Dorsolateral prefrontal cortex (tissue), 120 donors: ENCODE measurements at regions of chr10 and their contacts with region 1.

Region 1: GRCh38 chr10:78211561-78212051 is 177.9 kb downstream of the RPS24 start:
- DNase-seq: peak in 9 of 10 donors; percentile 25 to 84 (median 67)
- H3K4me3 ChIP-seq: no peak overlapping the region
- H3K27ac ChIP-seq: peak overlapping the region in 10 of 59 donors; percentile 6 to 51 (median 28)
- H3K27me3 ChIP-seq: no peaks in the 10 kb centered on the region
- CTCF ChIP-seq: peak in 55 of 56 donors; percentile 38 to 85 (median 70)

Region 2: GRCh38 chr10:78047314-78047891 is 164.2 kb before region 1 on chr10:
- intact Hi-C with region 1: loop called in 1 of 2 experiments (anchors 2 kb)
- DNase-seq: peak; percentile 88 to 98 (median 92)
- H3K4me3 ChIP-seq: peak overlapping the region in 17 of 59 donors; percentile 10 to 32 (median 22)
- H3K27ac ChIP-seq: peak overlapping the region in 12 of 59 donors; percentile 19 to 66 (median 42)
- H3K27me3 ChIP-seq: no peaks in the 10 kb centered on the region
- CTCF ChIP-seq: peak; percentile 88 to 99 (median 94)

Region 3: DNA sequence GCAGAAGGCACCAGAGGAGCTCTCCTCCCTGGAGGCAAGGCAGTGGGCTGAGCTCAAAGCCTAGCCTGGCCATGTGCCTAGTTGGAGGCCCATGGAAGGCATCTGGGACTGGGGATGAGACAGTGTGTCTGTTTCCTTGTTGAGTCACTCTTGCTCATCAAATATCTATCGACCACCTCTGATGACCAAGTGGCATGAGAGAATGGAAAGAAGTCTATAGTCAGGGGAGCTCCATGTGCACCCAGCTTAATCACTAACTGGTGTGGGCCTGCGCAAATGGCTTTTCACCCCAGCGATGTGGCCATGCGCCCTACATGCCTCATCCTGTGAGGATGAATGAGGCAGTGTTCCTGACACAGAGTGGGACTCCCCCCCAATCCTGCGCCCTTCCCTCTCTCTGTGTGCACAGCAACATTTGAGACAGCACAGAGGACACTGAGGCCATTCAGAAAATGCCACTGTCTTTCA is 51.9 kb after region 1 on chr10:
- intact Hi-C with region 1: loop called in 1 of 2 experiments (anchors 5 kb)
- DNase-seq: peak in 9 of 10 donors; percentile 73 to 93 (median 83)
- H3K4me3 ChIP-seq: peak overlapping the region in 2 of 59 donors; percentile 32 to 35
- H3K27ac ChIP-seq: peak overlapping the region; percentile 2 to 98 (median 90)
- H3K27me3 ChIP-seq: no peaks in the 10 kb centered on the region
- CTCF ChIP-seq: peak in 4 of 56 donors; percentile 9 to 32 (median 16)

Region 4: DNA sequence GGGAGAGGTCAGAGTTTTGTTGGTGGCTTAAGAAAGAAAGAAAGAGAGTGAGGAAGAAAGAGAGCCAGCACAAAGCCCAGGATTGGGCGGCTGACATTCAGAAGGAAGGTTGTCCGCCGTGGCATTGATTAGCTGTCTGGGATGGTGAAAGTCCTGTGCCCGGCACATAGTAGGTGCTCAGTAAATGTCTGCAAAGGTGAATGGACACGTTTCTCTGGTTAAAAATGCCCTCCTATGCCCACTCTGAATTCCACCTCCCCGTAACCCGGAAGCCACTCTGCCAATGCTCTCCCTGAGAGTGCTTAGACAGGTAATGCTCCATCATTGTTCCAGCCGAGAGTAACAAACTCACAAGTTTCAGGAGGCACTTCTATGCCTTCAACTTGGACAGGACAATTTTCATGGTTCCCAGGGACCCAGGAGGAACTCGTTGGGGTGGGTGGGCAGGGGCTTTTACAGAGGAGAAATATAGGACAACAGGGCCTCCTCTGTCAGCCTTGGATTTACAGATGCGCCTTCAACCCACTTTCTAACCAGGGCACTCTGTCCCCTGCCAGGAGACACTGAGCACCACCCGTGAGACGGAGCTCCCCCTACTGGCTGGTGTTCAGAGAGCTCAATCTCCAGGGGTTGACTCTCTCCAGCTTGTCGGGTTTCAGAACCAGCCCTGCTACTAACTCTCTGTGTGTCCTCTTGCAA is 445.7 kb after region 1 on chr10:
- intact Hi-C with region 1: loop called in 1 of 2 experiments (anchors 10 kb)
- DNase-seq: peak; percentile 19 to 70 (median 58)
- H3K4me3 ChIP-seq: peak overlapping the region in 2 of 59 donors; percentile 9 to 25
- H3K27ac ChIP-seq: peak overlapping the region in 4 of 59 donors; percentile 8 to 54 (median 15)
- H3K27me3 ChIP-seq: no peaks in the 10 kb centered on the region
- CTCF ChIP-seq: peak in 55 of 56 donors; percentile 23 to 73 (median 61)